Right ventricle myocardium inferior (tissue), 1 donor: ENCODE measurements at regions of chr21 and their contacts with region 1.

Region 1: DNA sequence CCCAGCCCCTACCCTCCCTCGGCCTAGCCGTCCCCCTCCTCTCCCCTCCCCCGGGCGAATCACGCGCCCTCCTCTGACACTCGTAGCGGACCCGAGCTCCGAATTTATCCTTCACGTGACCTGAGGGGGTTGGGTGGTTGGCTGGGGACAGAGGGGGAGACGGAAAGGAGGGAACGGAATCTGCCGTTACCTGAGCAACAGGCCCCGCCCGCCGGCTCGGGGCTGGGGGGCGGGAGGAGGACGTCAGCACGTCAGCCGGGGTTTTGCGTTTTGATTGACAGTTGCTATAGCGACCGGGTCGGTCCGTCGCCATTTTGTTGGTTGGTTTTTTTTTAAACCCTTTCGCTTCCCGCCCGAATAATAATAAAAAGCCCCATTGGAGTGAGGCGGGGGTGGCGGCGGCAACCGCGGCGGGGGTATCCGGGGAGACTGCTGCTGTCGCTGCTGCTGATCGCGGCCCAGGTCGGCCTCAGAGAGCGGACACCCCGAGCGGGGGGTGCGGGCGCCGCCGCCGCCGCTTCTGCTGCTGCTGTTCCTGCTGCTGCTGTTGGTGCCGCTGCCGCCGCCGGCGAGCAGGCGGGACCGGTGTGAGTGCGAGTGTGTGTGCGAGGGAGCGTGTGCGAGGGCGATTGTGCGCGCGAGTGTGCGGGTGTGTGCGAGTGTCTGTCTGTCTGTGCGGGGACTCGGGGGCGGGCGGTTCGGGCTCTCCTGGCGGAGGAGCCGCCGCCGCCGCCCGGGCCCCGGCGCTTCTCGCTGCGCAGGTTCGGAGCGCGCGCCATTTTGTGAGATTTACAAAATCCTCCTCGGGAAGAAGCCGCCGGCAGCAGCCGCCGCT is at the start of gene DYRK1A:
- DNase-seq: peak; percentile 99
- ATAC-seq: peak; percentile 96
- total RNA-seq, gene DYRK1A: 63.5 TPM

Region 2: DNA sequence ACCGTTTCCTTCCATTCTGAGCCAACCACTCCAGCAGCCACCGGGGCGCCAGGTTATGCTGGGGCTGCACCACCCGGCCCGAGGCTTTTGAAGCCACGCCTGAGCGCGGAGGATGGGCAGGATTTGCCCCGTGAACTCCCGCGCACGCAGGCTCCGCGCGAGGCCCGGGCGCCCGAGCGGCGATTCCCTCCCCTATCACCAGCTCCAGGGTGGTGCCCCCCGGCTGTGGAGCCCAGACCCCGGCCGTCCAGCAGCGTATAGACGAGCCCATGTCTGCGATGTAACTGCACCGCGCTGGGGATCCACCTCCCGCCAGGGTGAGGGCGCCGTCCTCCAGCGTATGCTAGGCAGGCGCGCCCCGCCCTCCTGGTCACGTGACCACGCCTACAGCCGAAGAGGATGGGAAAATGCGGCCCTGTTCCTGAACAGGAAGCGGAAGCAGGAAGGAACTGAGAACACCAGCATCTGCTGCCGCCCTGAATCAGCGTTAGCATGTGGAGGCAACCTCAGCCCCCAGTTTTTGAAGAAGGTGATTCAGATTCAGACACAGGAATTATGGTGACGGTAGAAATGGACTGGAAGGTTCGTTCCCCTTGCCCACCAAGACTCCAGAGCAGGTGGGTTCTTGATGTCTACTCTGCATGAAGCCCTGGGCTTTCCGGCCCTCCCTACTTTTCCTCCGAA is 145.6 kb before region 1 on chr21:
- intact Hi-C with region 1: loop called (anchors 2 kb)
- DNase-seq: peak; percentile 99
- ATAC-seq: peak; percentile 96

Region 3: DNA sequence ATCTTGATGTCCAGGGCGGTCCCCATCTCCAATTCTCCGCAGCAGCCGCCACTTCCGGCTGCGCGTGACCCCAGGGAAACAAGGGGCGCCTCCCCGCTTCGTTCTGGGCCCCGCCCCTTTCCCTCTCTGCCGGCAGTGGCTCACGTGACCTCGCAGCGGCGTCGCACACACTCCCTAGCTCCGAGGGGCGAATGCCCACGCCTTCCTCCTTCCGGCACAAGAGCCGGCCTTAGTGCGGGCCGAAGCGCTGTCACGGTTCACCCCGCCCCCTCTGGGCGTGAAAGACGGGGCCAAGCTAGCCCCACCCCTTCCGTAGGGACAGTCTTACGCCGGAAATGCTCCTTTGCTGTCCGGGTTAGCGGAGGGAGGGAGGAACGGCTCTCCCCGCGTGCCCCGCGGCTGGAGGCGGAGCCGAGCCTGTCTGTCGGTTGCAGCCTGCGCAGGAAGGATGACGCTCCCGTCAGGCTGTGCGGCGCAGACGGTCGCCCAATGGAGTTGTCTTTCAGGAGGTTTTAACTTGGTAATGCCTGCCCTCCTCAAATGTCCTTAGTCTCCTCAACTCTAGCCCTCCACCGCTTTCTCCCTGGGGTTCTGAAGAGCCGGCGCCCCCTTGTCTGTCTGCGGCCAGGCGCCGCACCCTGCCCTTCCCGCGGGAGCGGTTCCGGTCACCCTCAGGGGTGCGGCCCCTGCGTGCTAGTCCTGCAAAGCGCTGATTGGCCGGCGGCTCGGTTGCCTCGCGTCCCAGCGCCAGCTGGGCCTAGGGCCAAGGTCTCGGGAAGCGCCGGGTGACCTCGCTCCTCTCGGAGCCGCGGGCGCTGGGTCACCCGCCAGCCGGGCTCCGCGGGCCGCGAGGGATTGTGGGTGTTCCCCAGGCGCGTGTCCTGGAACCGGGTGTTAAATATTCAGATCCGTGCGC is 99.2 kb before region 1 on chr21 and contains the start of gene VPS26C:
- intact Hi-C with region 1: loop called (anchors 1 kb)
- DNase-seq: peak; percentile 99
- ATAC-seq: peak; percentile 97
- total RNA-seq, gene VPS26C: 49.7 TPM

Region 4: DNA sequence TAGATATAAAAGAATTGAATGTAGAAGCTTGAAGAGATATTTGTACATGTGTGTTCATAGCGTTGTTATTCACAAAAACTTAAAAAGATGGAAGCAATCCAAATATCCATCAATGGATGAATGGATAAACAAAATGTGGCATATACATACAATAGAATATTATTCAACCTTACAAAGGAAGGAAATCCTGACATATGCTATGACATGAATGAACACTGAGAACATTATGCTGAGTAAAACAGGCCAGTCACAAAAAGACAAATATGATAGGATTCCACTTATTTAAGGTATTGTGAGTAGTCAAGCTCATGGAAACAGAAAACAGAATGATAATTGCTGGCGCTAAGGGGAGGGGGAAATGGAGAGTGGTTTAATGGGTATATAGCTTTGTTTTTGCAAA is 47.1 kb before region 1 on chr21:
- intact Hi-C with region 1: no loop called
- DNase-seq: no peak
- ATAC-seq: no peak

Region 5: DNA sequence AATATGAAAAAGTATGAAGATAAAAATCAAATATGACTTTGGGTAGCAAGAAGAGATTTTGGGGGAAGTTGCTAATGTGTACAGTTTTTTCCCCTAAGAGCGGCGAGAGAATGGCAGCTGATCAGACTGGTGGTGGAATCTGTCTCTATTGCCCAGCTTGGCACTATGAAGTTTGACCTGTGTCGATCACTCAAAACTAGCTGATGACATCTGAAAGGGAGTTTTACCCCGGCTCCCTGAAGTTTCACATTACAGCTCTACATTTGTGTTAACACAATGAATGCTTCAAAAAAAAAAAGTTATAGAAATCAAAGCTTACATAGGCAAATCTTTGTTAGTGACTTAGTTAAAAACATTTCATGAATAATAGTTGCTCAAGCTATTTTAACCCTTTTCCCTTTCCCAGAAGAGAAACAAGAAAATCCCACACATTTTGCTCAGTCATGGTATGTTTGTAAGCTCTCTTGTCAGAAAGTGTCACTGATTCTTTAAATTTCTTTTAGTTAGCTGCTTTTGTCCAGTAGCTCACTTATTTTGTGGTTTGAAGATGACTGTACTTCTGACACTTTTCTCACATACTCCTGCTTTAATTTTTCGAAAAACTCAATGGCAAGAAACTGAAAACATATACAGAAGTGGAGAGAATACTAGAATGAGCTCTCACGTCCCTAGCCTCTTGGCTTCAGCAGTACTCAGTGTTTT is 41.2 kb after region 1 on chr21:
- intact Hi-C with region 1: loop called (anchors 5 kb)
- DNase-seq: no peak
- ATAC-seq: no peak

Region 6: GRCh38 chr21:37463083-37463801 is 96.5 kb after region 1 on chr21:
- intact Hi-C with region 1: loop called (anchors 5 kb)
- DNase-seq: no peak
- ATAC-seq: peak; percentile 68

Region 7: DNA sequence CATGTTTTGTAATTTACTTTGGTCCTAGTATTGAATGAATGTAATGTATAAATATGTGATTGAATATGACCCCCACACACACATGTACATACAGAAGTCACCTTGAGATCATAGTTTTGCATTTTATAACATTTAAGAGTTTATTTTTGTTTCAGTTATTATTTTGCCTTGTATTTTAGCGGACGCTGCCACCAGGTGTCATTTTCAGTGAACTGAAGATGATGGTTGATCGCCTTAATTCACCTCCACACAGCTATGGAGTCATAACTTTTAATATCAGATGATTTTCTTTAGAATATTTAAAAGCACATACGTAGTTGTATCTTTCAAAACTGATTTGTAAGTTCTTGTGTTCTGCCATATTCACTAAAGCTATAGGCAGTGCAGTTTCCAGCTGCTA is 130.3 kb after region 1 on chr21:
- intact Hi-C with region 1: no loop called
- DNase-seq: no peak
- ATAC-seq: no peak

Region 8: GRCh38 chr21:37563641-37564340 is 197.1 kb after region 1 on chr21:
- intact Hi-C with region 1: loop called (anchors 1 kb)
- DNase-seq: peak; percentile 97
- ATAC-seq: peak; percentile 95

Region 9: DNA sequence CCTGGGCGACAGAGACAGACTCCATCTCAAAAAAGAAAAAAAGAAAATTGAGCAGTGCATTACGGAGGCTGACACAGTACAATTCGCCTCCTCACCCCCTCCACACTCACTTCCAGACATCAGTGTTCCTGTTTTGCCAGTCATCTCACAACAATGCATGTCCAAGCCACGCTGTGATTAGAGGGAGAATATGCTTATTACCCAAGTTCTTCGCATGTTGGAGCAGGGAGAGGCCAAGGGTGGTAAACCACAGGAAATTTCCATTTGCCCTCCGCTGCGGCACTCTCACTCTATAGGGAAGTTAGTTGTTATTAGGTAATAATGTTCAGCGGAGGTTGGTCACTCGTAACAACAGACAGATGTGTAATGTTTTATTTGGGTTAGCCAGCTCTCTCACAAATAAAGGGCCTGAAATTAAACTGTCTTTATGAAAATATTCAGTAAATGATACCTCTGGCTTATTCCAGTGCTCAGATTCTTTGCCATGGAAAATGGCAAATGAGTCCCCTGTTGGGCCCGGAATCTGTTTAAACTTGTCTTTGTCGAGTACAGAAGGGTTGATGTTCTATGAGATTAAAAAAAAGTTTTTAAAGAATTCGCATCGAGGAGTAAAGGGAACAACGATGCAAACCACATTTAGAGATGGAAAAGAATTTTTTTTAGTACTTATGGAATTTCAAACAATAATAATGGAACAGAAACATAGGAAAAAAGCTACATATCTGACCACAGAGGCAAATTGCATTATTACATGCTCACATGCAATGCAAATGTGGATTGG is 923.2 kb after region 1 on chr21:
- intact Hi-C with region 1: no loop called
- DNase-seq: peak; percentile 86
- ATAC-seq: peak; percentile 85